Dendritic cell treated with granulocyte-macrophage colony-stimulating factor and Interleukin-4, amounts not matched to agents 40 ng/mL and 50 ng/mL, for 4 days (primary cell): ENCODE measurements at regions of chr14 and their contacts with region 1.

Region 1: GRCh38 chr14:55051426-55052268 is at the start of gene MAPK1IP1L:
- H3K4me3 Mint-ChIP-seq: peak within 1 kb of the TSS; percentile 86
- H3K27ac Mint-ChIP-seq: peak within 1 kb of the TSS; percentile 92
- H3K4me1 Mint-ChIP-seq: peaks cover 29% of the 10 kb centered on the region
- H3K27me3 Mint-ChIP-seq: no peaks in the 10 kb centered on the region

Region 2: GRCh38 chr14:55026793-55027561 is 24.7 kb before region 1 on chr14 and contains the starts of genes SOCS4 and WDHD1:
- intact Hi-C with region 1: loop called (anchors 2 kb)
- H3K4me3 Mint-ChIP-seq: peak within 1 kb of the TSS; percentile 96
- H3K27ac Mint-ChIP-seq: peak within 1 kb of the TSS; percentile 96
- H3K4me1 Mint-ChIP-seq: peaks cover 33% of the 10 kb centered on the region
- H3K27me3 Mint-ChIP-seq: no peaks in the 10 kb centered on the region

Region 3: GRCh38 chr14:55270832-55271565 is 219.4 kb after region 1 on chr14 and contains the start of gene FBXO34:
- intact Hi-C with region 1: loop called (anchors 10 kb)
- H3K4me3 Mint-ChIP-seq: peak within 1 kb of the TSS; percentile 84
- H3K27ac Mint-ChIP-seq: peak within 1 kb of the TSS; percentile 94
- H3K4me1 Mint-ChIP-seq: peaks cover 34% of the 10 kb centered on the region
- H3K27me3 Mint-ChIP-seq: no peaks in the 10 kb centered on the region